ENCODE measurements at regions of chr1 and their contacts with region 1.

Region 1: DNA sequence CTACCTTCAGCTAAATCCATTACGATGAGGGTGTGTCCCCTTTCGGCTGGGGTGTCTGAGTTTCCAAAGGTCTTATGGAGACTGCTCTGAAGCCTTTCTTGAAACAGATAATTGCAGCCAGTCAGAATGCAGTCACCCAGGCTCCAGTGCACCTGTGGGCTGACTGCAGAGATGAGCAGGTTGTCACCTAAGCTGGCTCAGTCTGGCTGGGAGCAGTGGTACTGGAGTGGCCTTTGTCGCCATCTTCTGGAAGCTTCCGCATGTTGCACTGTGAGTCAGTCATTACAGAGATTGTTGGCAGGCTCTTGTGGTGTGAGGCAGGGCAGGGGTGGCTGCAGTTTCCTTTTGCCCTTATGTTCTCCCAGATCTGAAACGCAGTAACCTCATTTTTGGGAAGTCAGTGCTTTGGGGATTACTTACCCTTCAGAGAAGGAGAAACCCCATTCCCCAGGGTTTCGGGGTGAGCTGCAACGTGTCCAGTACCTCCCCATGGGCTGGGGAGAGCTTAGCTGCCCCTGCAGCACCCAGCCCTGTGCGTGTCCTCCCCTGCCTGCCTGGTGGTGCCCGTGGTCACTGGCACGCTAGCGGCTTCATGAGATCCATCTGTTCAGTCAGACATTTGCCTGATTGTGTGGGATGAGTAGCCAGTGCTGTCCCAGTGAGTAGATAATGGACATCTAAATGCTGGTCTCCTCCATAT is 48.0 kb downstream of the SMYD2 start:
- DNase-seq: peak; percentile 81
- ATAC-seq: peak; percentile 85
- H3K4me3 ChIP-seq: no peak overlapping the region
- H3K27ac ChIP-seq: no peak overlapping the region
- H3K4me1 ChIP-seq: peaks cover 5% of the 10 kb centered on the region
- H3K27me3 ChIP-seq: no peaks in the 10 kb centered on the region
- CTCF ChIP-seq: peak; percentile 96
- POLR2A ChIP-seq: peak; percentile 65; the same call in 1 of the 2 replicates
- RAD21 ChIP-seq: peak; percentile 97

Region 2: GRCh38 chr1:213122514-213122929 is 1206.4 kb before region 1 on chr1:
- CTCF ChIA-PET with region 1: no interaction called
- POLR2A ChIA-PET with region 1: no interaction called
- dilution Hi-C with region 1: no loop called
- in situ Hi-C with region 1: no loop called
- intact Hi-C with region 1: loop called (anchors 5 kb)
- DNase-seq: peak; percentile 71
- ATAC-seq: peak; percentile 55
- H3K4me3 ChIP-seq: no peak overlapping the region
- H3K27ac ChIP-seq: no peak overlapping the region
- H3K4me1 ChIP-seq: peaks cover 10% of the 10 kb centered on the region
- H3K27me3 ChIP-seq: no peaks in the 10 kb centered on the region
- CTCF ChIP-seq: peak; percentile 59
- POLR2A ChIP-seq: no peak
- RAD21 ChIP-seq: peak; percentile 57

Region 3: DNA sequence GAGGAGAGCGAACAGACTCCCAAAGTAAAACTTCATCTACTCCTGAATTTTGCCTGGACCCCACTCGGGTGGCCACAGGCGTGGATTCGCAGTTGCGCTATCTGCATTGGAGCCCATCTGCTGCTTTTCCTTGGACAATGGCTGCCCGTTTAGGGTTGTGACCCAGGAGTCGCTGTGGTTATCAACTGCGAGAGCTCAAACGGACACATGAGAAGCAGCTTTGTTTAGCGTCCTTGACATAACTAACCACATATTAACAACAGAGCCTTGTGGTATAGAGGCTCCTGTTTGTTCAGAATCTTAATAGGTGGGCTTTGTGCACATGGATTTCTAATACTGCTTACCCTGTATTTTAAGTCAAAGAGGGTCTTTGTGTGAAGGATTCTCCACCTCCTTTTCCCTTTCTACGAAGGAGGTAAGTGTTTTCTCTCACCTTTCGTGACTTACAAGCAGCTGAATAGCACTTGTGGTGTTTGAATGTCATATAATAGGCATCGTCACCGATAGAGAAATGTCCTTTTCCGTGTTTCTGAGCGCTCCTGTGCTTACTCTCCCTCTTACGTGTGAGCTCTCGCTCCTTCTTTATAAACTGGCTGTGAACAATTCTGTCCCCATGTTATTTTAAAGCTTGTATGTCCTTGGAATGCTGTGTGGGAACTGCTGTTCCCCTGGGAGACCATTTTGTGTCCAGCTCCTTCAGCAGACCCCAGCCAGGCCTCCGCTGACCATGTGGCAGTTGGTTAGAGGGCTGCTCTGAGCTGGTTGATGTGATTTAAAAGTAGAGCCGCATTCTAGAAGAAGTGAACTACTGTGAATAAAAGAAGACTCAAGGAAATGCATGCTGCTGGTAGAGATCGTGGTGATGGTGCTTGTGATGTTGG is 836.5 kb before region 1 on chr1:
- CTCF ChIA-PET with region 1: no interaction called
- POLR2A ChIA-PET with region 1: no interaction called
- dilution Hi-C with region 1: no loop called
- in situ Hi-C with region 1: no loop called
- intact Hi-C with region 1: no loop called
- DNase-seq: no peak
- ATAC-seq: no peak
- H3K4me3 ChIP-seq: no peak overlapping the region
- H3K27ac ChIP-seq: no peak overlapping the region
- H3K4me1 ChIP-seq: no peaks in the 10 kb centered on the region
- H3K27me3 ChIP-seq: no peaks in the 10 kb centered on the region
- CTCF ChIP-seq: no peak
- POLR2A ChIP-seq: no peak
- RAD21 ChIP-seq: no peak

Region 4: DNA sequence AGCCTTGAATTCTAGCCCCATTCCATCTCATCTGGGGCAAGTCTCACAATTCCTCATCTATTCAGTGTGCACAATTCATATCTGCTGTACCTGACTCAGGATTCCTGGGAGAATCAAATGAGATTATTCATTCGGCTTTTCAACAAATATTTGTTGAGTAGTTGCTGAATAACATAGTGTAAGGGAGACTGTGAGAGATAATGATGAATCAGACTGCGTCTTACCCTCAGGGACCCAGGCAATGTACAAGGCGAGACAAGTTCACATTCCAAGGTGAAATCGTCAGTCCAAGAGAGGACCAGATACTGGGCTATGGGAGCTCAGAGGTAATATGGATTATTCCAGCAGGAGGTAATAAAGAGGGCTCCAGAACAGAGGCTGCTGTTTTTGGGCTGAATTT is 115.8 kb before region 1 on chr1:
- CTCF ChIA-PET with region 1: interaction called, 51 read pairs
- POLR2A ChIA-PET with region 1: no interaction called
- dilution Hi-C with region 1: no loop called
- in situ Hi-C with region 1: loop called (anchors 5 kb)
- intact Hi-C with region 1: loop called (anchors 1 kb)
- DNase-seq: peak; percentile 18
- ATAC-seq: peak; percentile 48
- H3K4me3 ChIP-seq: no peak overlapping the region
- H3K27ac ChIP-seq: no peak overlapping the region
- H3K4me1 ChIP-seq: no peaks in the 10 kb centered on the region; the same call in 1 of the 2 replicates
- H3K27me3 ChIP-seq: peaks cover 38% of the 10 kb centered on the region
- CTCF ChIP-seq: no peak
- POLR2A ChIP-seq: no peak
- RAD21 ChIP-seq: no peak

Region 5: GRCh38 chr1:214551436-214552173 is 222.7 kb after region 1 on chr1 and contains the start of gene PTPN14:
- CTCF ChIA-PET with region 1: interaction called, 4 read pairs
- POLR2A ChIA-PET with region 1: no interaction called
- dilution Hi-C with region 1: no loop called
- in situ Hi-C with region 1: no loop called
- intact Hi-C with region 1: loop called (anchors 10 kb)
- DNase-seq: peak; percentile 96
- ATAC-seq: peak; percentile 88
- H3K4me3 ChIP-seq: peak within 1 kb of the TSS; percentile 76
- H3K27ac ChIP-seq: peak within 1 kb of the TSS; percentile 97
- H3K4me1 ChIP-seq: peaks cover 6% of the 10 kb centered on the region
- H3K27me3 ChIP-seq: no peaks in the 10 kb centered on the region
- CTCF ChIP-seq: peak; percentile 59
- POLR2A ChIP-seq: peak; percentile 81
- RAD21 ChIP-seq: peak; percentile 37; the same call in 1 of the 2 replicates
- total RNA-seq, gene PTPN14: 31.7 and 42.8 TPM in 2 replicates

Region 6: DNA sequence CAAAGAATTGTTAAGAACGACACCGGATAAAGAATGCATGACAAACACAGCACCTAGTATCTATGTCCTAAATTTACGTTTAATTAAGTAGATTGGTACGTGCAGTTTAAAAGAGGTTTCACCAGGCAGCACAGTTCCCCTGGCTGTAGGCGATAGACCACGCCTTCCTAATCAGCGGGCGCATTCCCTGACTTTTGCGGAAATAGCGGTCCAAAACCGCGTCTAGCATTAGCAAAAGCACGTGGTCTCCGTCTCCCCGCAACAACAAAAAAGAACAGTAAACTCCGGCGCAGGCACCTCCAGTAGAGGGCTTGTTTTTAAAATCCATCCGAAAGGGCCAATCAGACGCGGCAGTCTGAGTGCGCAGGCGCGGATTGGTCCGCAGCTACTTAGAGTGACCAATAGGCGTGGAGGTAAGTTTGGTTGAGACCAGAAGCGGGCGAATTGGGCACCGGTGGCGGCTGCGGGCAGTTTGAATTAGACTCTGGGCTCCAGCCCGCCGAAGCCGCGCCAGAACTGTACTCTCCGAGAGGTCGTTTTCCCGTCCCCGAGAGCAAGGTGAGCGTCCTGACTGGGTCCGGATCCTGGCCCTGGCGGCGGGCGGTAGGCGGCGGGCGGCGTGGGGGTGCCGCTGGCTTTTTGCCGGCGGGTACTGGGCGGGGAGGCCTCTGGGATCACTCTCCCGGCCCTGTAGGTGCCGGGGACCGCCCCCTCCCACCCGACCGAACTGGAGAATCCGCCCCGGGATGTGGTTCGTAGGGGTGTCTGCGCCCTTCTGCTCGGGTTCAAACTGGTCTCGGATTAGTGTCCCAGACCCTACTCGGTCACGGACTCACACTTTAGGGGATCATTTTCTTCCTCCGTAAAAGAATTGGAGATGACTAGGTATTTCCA is 274.1 kb after region 1 on chr1 and contains the start of gene CENPF:
- CTCF ChIA-PET with region 1: no interaction called
- POLR2A ChIA-PET with region 1: no interaction called
- dilution Hi-C with region 1: no loop called
- in situ Hi-C with region 1: no loop called
- intact Hi-C with region 1: loop called (anchors 1 kb)
- DNase-seq: peak; percentile 99
- ATAC-seq: peak; percentile 99
- H3K4me3 ChIP-seq: peak within 1 kb of the TSS; percentile 69
- H3K27ac ChIP-seq: peak within 1 kb of the TSS; percentile 33; the same call in 1 of the 2 replicates
- H3K4me1 ChIP-seq: peaks cover 4% of the 10 kb centered on the region
- H3K27me3 ChIP-seq: no peaks in the 10 kb centered on the region
- CTCF ChIP-seq: peak; percentile 20; the same call in 1 of the 2 replicates
- POLR2A ChIP-seq: peak; percentile 52; the same call in 1 of the 2 replicates
- RAD21 ChIP-seq: no peak
- total RNA-seq, gene CENPF: 51.8 and 80.0 TPM in 2 replicates

Region 7: DNA sequence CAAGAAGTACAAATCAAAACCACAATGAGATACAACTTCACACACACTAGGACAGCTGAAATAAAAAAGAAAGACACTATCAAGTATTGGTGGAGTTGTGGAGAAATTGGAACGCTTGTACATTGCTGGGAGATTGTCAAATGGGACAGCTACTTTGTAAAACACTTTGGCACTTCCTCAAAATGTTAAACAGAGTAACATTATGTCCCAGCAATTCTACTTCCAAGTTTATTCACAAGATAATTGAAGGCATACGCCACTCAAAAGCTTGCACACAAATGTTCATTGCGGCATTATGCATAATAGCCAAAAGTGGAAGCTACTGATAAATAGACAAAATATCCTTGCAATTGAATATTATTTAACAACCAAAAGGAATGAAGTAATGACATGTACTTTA is 553.7 kb after region 1 on chr1:
- CTCF ChIA-PET with region 1: no interaction called
- POLR2A ChIA-PET with region 1: no interaction called
- dilution Hi-C with region 1: no loop called
- in situ Hi-C with region 1: no loop called
- intact Hi-C with region 1: no loop called
- DNase-seq: no peak
- ATAC-seq: no peak
- H3K4me3 ChIP-seq: no peak overlapping the region
- H3K27ac ChIP-seq: no peak overlapping the region
- H3K4me1 ChIP-seq: no peaks in the 10 kb centered on the region
- H3K27me3 ChIP-seq: no peaks in the 10 kb centered on the region
- CTCF ChIP-seq: no peak
- POLR2A ChIP-seq: no peak
- RAD21 ChIP-seq: no peak

Region 8: DNA sequence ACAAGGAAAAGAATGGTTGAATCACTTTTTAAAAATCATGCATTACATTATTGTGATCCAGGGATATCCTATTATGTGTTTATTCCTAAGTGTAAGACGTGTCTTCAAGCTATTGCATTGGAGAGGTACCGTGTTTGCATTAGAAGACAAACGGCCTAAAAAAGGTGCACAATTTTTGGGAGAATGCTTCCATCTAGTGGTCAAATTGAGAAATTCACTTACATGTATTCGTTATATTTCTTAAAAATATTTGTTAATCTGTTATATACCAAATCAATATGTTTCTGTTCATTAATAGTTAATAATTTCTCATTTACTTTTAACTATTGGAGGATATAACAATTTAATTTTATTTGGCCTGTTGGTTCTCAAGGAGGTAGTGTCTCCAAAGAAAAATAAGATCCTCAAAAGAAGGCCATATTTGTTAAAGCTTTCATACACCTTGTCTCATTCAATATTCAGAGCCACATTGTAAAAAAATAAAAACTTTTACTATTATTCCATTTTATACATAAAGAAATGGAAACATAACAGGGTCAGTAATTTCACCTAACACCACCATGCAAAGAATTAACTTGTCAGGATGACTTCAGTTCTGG is 1197.7 kb after region 1 on chr1:
- CTCF ChIA-PET with region 1: interaction called, 5 read pairs
- POLR2A ChIA-PET with region 1: interaction called, 4 read pairs
- dilution Hi-C with region 1: no loop called
- in situ Hi-C with region 1: loop called (anchors 5 kb)
- intact Hi-C with region 1: loop called (anchors 1 kb)
- DNase-seq: peak; percentile 69
- ATAC-seq: peak; percentile 63; the same call in 1 of the 2 replicates
- H3K4me3 ChIP-seq: no peak overlapping the region
- H3K27ac ChIP-seq: no peak overlapping the region
- H3K4me1 ChIP-seq: peaks cover 3% of the 10 kb centered on the region
- H3K27me3 ChIP-seq: no peaks in the 10 kb centered on the region
- CTCF ChIP-seq: peak; percentile 70
- POLR2A ChIP-seq: no peak
- RAD21 ChIP-seq: peak; percentile 82

Measured in IMR-90 (cell line).